Activated CD4-positive, alpha-beta memory T cell treated with anti-CD3 and anti-CD28 coated beads, Interleukin-2, amount 10 ng/mL, durations not matched to agents 7 days and 5 days (primary cell): ENCODE measurements at regions of chr5 and their contacts with region 1.

Region 1: DNA sequence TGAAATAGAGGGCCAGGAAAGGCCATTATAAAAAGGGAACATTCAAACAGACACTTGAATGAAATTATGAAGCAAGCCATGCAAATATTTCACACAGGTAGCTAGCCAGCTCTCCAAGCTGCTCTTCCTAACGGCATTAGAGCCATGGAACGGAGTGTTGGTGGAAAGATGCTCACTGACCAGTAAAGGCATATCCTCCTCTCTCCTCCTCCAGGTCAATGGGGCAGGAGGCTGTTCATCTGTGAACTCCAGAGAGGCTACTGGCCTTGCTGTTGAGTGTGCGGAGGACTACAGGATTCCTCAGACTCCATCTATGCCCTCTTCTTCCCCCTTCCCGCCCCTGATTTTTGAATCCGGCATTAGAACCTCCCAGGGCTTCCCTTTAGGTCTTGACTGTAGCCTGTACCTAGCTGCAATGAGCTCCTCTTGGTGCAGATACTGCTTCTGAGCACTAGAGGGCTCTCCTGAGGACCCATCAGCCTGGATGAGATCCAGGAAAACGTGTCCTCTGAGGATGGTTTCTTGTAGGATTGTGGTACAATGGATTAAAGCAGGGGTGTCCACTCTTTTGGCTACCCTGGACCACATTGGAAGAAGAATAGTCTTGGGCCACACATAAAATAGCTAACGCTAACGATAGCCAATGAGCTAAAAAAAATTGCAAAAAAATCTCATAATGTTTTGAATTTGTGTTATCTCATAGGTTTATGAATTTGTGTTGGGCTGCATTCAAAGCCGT is 162.2 kb downstream of the SREK1 start:
- DNase-seq: peak; percentile 30
- H3K4me3 Mint-ChIP-seq: no peak overlapping the region
- H3K27ac Mint-ChIP-seq: no peak overlapping the region
- H3K4me1 Mint-ChIP-seq: peaks cover 2% of the 10 kb centered on the region
- H3K27me3 Mint-ChIP-seq: peaks cover 15% of the 10 kb centered on the region

Region 2: GRCh38 chr5:65760504-65761275 is 545.6 kb before region 1 on chr5:
- CTCF ChIA-PET with region 1: interaction called, 14 read pairs
- POLR2A ChIA-PET with region 1: no interaction called
- DNase-seq: peak; percentile 72
- H3K4me3 Mint-ChIP-seq: no peak overlapping the region
- H3K27ac Mint-ChIP-seq: no peak overlapping the region
- H3K4me1 Mint-ChIP-seq: peaks cover 9% of the 10 kb centered on the region
- H3K27me3 Mint-ChIP-seq: no peaks in the 10 kb centered on the region

Region 3: DNA sequence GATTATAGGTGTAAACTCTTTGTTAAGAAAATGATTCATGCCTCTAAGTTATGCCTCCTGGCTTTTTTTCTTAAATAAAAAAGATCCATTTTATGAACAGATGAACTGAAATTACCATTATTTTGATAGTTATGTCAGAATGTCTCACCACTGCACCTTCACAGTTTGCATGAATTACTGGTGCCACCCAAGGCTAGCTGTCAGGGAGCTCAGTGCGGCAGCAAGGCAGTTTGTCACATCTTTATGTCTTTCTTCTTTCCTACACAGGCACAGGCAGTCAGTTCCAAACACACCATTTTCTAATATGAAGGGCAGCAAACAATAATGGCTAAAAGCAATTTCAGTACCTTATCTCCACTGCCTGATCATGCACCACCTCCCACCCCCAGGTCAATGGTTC is 14.5 kb before region 1 on chr5:
- CTCF ChIA-PET with region 1: interaction called, 18 read pairs
- POLR2A ChIA-PET with region 1: interaction called, 3 read pairs
- DNase-seq: no peak
- H3K4me3 Mint-ChIP-seq: no peak overlapping the region
- H3K27ac Mint-ChIP-seq: no peak overlapping the region
- H3K4me1 Mint-ChIP-seq: no peaks in the 10 kb centered on the region
- H3K27me3 Mint-ChIP-seq: peaks cover 10% of the 10 kb centered on the region

Region 4: GRCh38 chr5:66324357-66324756 is 18.1 kb after region 1 on chr5:
- CTCF ChIA-PET with region 1: interaction called, 36 read pairs
- POLR2A ChIA-PET with region 1: no interaction called
- DNase-seq: no peak
- H3K4me3 Mint-ChIP-seq: no peak overlapping the region
- H3K27ac Mint-ChIP-seq: no peak overlapping the region
- H3K4me1 Mint-ChIP-seq: peaks cover 1% of the 10 kb centered on the region
- H3K27me3 Mint-ChIP-seq: peaks cover 10% of the 10 kb centered on the region

Region 5: DNA sequence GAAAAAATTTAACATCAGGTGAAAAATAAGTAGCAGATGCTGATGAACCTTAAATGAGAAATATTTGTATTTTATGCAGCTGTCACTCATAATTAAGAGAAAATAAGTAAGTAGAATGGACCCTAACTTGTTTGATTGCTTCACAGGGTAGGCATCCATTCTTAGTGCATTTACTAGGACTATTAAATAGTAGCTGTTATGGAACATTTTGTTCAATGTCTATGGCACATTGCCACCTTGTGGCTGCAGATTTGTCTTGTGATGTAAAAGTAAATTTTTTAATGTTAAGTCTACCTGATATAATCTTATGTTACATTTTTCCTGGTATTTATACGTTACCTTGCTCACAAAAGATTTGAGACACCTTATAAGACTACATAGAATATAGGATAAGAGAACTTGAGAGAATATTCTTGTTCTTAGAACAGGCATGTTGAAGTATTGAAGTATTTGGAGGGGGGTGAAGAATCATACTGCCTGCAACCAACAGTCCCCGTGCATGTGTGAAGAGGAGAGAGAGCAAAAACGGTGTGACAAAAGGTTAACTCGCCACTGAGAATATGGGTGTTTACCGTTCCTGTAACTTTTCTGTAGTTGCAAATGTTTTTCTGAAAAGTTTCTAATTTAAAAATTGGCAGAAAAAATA is 451.0 kb after region 1 on chr5:
- CTCF ChIA-PET with region 1: interaction called, 52 read pairs
- POLR2A ChIA-PET with region 1: interaction called, 4 read pairs
- DNase-seq: peak; percentile 26
- H3K4me3 Mint-ChIP-seq: no peak overlapping the region
- H3K27ac Mint-ChIP-seq: no peak overlapping the region
- H3K4me1 Mint-ChIP-seq: no peaks in the 10 kb centered on the region
- H3K27me3 Mint-ChIP-seq: peaks cover 46% of the 10 kb centered on the region